Naive thymus-derived CD4-positive, alpha-beta T cell (primary cell): ENCODE measurements at regions of chr2 and their contacts with region 1.

Region 1: DNA sequence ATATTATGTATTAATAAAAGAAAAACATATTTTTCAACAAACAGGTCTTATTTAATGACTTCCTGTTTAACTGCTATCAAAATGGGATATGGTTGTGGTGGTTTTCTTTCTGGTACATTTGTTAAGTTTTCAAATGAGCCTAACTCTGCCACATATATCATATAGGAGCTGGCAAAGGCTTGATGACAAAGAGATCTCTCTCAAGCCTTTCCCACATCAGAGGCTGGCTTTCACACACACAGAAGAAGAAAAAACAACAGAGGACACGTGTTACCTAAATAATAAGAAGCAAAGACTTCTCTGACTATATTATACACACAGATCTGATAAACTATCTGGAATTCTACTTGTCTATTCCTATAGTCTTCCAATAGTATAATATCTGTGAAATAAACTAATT is 46.1 kb downstream of the CFAP36 start:
- DNase-seq: peak in 6 of 9 donors; percentile 21 to 62 (median 40)
- ATAC-seq: peak; percentile 66
- H3K4me3 ChIP-seq: no peak overlapping the region
- H3K4me3 Mint-ChIP-seq: peak overlapping the region in 7 of 10 donors; percentile 4 to 67 (median 57)
- H3K27ac ChIP-seq: peak overlapping the region; percentile 28
- H3K27ac Mint-ChIP-seq: peak overlapping the region in 7 of 9 donors; percentile 27 to 90 (median 75)
- H3K4me1 ChIP-seq: peaks cover 10 to 17% of the 10 kb centered on the region in 2 donors
- H3K4me1 Mint-ChIP-seq: peaks cover 8 to 46% (median 36%) of the 10 kb centered on the region in 7 donors
- H3K27me3 ChIP-seq: no peaks in the 10 kb centered on the region
- H3K27me3 Mint-ChIP-seq: no peaks in the 10 kb centered on the region

Region 2: DNA sequence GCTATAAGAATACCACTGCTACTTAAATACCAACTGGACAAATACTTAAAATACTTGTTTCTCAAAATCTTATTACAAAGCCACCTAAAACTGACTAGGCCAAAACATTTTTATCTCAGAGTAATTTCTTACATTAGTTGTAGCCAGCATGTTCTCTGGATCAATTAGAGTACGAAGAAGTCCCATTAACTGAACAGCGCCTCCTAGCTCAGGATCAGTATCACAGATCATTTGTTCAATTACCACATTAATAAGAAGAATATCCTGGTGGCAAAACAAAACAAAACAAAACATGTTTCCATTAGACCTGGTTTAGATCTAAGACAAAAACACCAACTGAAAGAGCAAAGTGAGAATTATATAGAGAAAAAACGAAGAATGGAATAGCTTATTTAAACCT is 15.8 kb after region 1 on chr2:
- CTCF ChIA-PET with region 1: no interaction called
- POLR2A ChIA-PET with region 1: no interaction called
- intact Hi-C with region 1: loop called in 1 of 2 experiments (anchors 2 kb)
- DNase-seq: peak in 1 of 9 donors; percentile 10
- ATAC-seq: no peak
- H3K4me3 ChIP-seq: no peak overlapping the region
- H3K4me3 Mint-ChIP-seq: peak overlapping the region in 1 of 10 donors; percentile 23
- H3K27ac ChIP-seq: no peak overlapping the region
- H3K27ac Mint-ChIP-seq: peak overlapping the region in 8 of 9 donors; percentile 24 to 83 (median 64)
- H3K4me1 ChIP-seq: peaks cover 0 to 5% of the 10 kb centered on the region in 2 donors
- H3K4me1 Mint-ChIP-seq: peaks cover 2 to 41% (median 23%) of the 10 kb centered on the region in 7 donors
- H3K27me3 ChIP-seq: no peaks in the 10 kb centered on the region
- H3K27me3 Mint-ChIP-seq: no peaks in the 10 kb centered on the region

Region 3: DNA sequence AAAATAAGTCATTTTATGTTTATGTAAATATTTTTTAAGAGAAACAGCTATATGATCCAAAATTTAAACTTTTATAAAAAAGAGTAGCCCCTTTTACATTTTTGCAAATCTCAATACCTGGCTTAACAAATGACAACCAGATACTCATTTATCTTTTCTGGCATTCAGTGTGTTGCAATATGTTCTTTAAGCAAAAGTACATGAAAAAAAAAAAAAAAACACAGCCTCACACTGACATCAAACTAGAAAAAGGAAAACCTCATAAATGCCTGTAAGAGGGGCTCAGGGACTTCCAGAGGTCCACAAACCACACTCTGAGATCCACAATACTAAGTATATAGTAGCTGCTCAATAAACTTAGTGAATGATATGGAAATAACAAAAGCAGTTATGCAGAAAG is 29.9 kb after region 1 on chr2:
- CTCF ChIA-PET with region 1: no interaction called
- POLR2A ChIA-PET with region 1: no interaction called
- intact Hi-C with region 1: no loop called
- DNase-seq: no peak
- ATAC-seq: no peak
- H3K4me3 ChIP-seq: no peak overlapping the region
- H3K4me3 Mint-ChIP-seq: no peak overlapping the region
- H3K27ac ChIP-seq: no peak overlapping the region
- H3K27ac Mint-ChIP-seq: no peak overlapping the region
- H3K4me1 ChIP-seq: no peaks in the 10 kb centered on the region
- H3K4me1 Mint-ChIP-seq: peaks cover 19 to 73% (median 58%) of the 10 kb centered on the region in 7 donors
- H3K27me3 ChIP-seq: no peaks in the 10 kb centered on the region
- H3K27me3 Mint-ChIP-seq: no peaks in the 10 kb centered on the region